ENCODE measurements at regions of chr1 and their contacts with region 1.

Region 1: DNA sequence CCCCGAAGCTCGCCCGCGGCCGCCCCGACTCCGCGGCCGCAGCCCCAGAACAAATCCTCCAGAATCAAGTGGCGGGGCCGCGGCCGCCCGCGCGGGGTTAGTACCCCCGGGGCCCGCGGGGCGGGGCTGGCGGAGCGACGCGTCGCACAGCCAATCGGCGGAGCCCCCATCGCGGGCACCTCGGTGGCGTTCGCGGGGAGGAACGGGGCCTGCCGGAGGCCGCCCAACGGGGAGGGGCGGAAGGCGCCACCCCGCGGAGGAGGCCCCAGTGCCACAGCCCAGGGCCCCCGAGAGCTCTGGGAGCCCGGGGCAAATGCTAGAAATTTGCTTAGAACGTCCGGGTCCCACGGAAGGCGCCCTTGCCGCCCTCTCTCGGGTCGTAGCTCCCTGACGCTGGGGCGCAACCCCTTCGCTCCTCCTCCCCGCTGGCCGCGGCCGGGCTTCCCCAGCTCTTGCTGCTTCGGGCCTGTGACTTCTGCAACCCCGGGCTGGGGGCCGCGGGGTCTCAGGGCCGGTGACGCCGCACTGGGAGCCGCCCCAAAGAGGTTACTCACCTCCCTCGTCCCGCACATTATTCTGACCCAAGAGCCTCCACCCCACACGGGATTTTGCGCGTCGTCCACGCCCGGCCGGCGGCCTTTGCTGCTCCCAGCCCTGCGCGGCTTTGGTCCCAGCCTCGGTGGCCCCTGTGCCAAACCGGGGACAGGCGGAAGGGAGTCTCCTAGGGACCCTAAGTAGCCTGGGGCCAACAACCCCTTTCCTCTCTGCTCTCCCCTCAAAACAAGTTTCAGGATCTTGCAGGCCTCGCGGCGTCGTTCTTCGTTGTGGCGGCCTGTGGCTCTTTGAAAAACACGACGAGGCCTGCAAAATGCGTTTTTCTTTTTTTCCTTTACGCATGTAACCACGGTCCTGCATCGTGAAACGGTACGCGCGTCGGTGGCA is at the start of gene RUNX3:
- DNase-seq: no peak
- H3K4me3 ChIP-seq: peak within 1 kb of the TSS; percentile 66
- CTCF ChIP-seq: peak; percentile 28

Region 2: GRCh38 chr1:24724345-24725208 is 205.9 kb before region 1 on chr1:
- CTCF ChIA-PET with region 1: no interaction called
- POLR2A ChIA-PET with region 1: no interaction called
- DNase-seq: no peak
- H3K4me3 ChIP-seq: no peak overlapping the region
- CTCF ChIP-seq: no peak

Region 3: GRCh38 chr1:24886241-24886640 is 44.2 kb before region 1 on chr1:
- CTCF ChIA-PET with region 1: no interaction called
- POLR2A ChIA-PET with region 1: no interaction called
- DNase-seq: no peak
- H3K4me3 ChIP-seq: no peak overlapping the region
- CTCF ChIP-seq: no peak

Region 4: DNA sequence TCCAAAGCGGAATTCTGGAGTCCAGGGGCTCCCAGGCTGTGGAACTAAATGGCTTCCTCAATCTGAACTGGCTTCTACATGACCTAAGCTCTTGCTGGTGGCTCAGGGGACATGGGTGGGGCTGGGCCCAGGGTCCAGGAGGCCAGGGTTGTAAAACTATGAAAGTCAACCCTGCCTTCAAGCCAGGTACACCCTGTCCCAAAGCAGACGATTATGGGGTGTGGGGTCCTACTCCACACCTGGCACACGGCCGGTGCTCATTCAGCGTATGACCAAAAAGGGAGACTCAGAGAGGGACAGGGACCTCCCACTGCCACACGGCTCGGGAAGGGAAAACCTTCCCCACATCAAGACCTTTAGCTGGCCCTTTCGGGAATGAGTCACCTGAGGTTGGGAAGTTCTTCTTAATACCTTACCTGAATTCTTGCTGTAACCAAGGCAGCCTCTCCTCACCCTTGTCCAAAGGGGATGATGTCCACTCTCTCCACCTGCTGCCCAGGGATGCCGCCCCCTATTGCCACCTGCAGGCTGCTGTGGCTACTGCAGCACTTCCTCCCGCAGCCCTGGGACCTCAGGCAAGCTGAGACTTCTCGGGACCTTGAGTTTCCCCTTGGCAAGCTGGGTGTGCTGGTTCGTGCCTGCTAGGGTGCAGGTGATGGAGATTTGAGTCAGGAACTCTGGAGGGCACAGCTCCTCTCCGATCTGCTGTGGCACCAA is 32.5 kb before region 1 on chr1:
- CTCF ChIA-PET with region 1: interaction called, 14 read pairs
- POLR2A ChIA-PET with region 1: no interaction called
- DNase-seq: no peak
- H3K4me3 ChIP-seq: no peak overlapping the region
- CTCF ChIP-seq: peak; percentile 95

Region 5: DNA sequence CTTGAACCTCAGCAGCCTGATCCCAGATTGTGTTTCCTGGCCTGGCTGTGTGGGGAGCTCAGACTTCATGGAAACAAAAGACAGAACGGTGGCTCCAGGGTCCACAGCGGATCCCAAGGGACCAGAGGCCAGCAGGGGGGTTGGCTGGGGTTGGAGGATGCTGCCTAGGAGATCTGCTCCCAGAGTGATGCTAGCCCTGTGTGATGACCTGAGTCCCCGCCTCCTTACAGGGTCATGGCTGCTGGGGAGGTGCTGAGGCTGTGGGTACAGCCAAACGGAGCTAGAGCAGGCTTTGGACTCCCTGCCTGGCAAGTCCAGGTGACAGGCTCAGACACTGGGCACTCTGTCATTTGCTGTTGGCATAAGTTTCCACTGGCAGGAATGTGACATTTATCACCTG is 11.1 kb after region 1 on chr1:
- CTCF ChIA-PET with region 1: interaction called, 45 read pairs
- POLR2A ChIA-PET with region 1: no interaction called
- DNase-seq: no peak
- H3K4me3 ChIP-seq: no peak overlapping the region
- CTCF ChIP-seq: no peak

Region 6: GRCh38 chr1:24952413-24952841 is 22.0 kb after region 1 on chr1:
- CTCF ChIA-PET with region 1: interaction called, 18 read pairs
- POLR2A ChIA-PET with region 1: no interaction called
- DNase-seq: no peak
- H3K4me3 ChIP-seq: no peak overlapping the region
- CTCF ChIP-seq: no peak

Region 7: GRCh38 chr1:25099343-25099951 is 169.0 kb after region 1 on chr1:
- CTCF ChIA-PET with region 1: interaction called, 136 read pairs
- POLR2A ChIA-PET with region 1: no interaction called
- DNase-seq: no peak
- H3K4me3 ChIP-seq: no peak overlapping the region
- CTCF ChIP-seq: no peak

Measured in AG04449 (cell line).